OCI-LY7 (cell line): ENCODE measurements at regions of chr9 and their contacts with region 1.

Region 1: DNA sequence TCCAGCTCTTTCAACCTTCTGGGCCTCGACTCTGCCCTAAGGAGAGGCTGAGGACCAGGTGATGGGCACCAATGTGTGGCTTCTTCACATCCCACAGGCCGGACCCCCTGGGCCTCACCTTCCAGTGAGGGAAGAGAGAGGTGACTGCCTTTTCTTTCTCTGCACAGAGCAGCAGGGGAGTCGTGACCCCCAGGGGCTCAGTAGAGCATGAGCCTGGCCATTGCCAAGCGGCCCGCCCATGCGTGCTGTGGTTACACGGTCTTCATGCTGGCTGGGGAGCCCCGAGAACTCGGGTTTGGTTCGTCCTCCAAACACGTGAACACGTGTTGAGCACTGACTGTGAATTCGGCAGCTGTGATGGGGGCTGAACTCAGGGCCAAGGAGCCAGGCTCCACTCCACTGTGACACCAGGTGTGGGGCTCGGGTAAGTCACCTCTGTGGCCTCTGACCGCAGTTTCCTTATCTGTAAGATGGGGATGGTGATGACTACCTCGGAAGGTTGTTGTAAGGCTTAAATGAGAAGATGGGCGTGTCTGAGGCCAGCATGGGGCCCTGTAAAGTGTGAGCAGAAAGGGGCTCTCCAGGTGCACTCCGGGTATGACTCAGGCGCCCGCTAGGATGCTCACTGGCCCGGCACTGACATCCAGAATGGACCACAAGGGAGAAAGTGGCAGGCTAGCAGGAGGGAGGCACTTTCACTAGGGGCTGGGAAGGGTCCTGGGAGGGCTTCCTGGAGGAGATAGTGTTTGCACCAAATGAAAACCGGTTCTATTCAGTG is 13.4 kb upstream of the GRHPR start:
- DNase-seq: peak; percentile 100
- H3K4me3 ChIP-seq: peak overlapping the region; percentile 74
- H3K27ac ChIP-seq: peak overlapping the region; percentile 97
- H3K4me1 ChIP-seq: peaks cover 98% of the 10 kb centered on the region
- CTCF ChIP-seq: 0 out of 2 replicates have a peak, but pooled peaks have one; percentile 29

Region 2: DNA sequence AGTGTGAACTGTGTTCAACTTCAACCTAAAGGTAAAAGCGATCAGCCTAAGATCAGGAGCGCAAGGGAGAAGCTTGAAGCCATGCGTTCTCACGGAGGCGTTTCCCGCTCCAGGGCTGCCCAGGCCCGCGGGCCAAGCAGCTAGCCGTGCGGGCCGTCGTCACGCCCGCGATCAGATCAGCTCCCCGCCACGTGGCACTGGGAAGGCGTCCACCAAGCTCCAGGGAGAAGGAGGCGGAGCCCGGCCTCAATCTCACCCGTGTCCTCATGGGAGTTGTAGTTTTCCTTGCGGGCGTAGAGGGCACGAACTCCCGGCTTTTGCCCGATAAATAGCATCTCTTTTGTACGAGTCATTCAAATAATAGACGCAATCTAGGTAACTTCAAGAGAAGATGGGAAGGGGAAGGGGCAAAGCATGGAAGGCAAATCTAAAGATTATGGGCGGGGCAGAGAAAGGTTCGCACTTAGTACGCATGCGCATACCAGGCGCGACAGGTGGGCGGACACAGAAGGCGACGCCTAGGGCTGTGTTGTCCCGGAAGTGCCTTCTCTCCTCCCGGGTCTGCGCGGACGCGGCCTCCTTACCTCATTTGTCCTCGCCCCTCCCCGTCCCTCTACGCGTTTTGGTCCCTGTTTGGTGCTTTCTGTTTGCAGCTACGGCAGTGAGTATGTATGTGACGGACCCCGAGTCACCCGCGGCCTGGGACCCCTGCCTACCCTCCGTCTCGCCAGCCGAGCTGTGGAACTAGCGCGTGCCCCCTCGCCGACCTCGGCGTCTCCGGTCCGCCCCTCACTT is 329.6 kb before region 1 on chr9:
- CTCF ChIA-PET with region 1: no interaction called
- POLR2A ChIA-PET with region 1: interaction called, 3 read pairs
- intact Hi-C with region 1: loop called (anchors 5 kb)
- DNase-seq: peak; percentile 97
- H3K4me3 ChIP-seq: peak overlapping the region; percentile 90
- H3K27ac ChIP-seq: peak overlapping the region; percentile 70
- H3K4me1 ChIP-seq: peaks cover 63% of the 10 kb centered on the region
- CTCF ChIP-seq: no peak

Region 3: DNA sequence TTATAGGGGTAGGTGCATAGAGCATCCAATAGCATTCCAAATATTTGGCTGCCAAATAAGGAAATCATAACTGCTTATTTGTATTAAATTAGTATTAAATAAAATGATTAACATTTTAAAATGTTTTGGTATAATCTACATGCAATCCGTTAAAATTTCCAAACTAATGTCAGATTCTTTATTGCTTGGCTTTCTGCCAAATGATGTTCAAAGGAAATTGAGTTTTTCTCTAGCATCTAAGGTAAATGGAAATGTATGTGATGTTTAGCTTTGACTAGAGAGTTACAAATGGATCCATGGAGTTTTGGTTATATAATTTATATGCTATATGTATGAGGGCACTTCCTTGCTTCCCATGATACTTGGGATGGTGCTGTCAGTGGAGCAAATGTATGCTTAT is 167.0 kb before region 1 on chr9:
- CTCF ChIA-PET with region 1: no interaction called
- POLR2A ChIA-PET with region 1: no interaction called
- intact Hi-C with region 1: no loop called
- DNase-seq: no peak
- H3K4me3 ChIP-seq: no peak overlapping the region
- H3K27ac ChIP-seq: no peak overlapping the region
- H3K4me1 ChIP-seq: peaks cover 30% of the 10 kb centered on the region
- CTCF ChIP-seq: no peak

Region 4: GRCh38 chr9:37293664-37294524 is 115.2 kb before region 1 on chr9:
- CTCF ChIA-PET with region 1: interaction called, 4 read pairs
- POLR2A ChIA-PET with region 1: interaction called, 20 read pairs
- intact Hi-C with region 1: loop called (anchors 2 kb)
- DNase-seq: peak; percentile 97
- H3K4me3 ChIP-seq: peak overlapping the region; percentile 46
- H3K27ac ChIP-seq: peak overlapping the region; percentile 99
- H3K4me1 ChIP-seq: peaks cover 100% of the 10 kb centered on the region
- CTCF ChIP-seq: no peak

Region 5: DNA sequence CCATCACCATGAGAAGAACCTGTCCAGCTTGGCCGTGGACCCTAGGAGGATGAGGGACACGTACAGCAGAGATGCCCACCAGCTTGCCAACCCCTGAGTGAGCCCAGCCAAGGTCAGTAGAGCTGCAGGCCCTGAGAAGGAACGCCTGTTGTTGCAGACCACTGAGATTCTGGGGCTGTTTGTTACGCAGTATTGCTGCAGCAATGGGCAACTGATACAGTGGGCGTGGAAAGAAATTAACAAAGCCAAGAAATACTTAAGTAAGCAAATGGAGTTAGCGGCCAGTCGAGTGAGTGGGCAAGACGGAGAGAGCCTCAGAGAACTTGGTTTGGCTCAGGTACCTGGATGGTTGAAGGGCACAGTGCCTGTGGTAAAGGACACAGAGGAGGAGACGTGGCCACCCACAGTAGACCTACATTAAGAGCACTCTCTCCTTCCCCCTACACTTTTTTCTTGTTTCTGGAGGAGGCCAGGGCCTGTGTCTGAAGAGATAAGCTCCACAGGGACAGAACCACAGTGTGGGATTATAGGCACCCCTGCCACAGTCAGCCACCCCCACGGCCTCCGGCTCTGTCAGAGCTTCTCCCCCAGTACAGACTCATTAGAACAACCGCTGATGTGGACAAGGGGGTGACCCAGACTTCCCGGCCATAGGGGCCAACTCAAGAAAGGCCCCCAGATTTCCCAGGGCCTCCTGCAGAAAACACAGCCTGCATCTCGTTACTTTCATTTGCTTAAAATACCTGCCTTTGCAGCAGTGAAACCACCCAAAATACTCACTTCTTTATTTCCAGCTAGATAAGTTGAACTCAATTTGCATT is 26.8 kb before region 1 on chr9:
- CTCF ChIA-PET with region 1: interaction called, 4 read pairs
- POLR2A ChIA-PET with region 1: interaction called, 298 read pairs
- intact Hi-C with region 1: no loop called
- DNase-seq: peak; percentile 71
- H3K4me3 ChIP-seq: peak overlapping the region; percentile 30
- H3K27ac ChIP-seq: peak overlapping the region; percentile 90
- H3K4me1 ChIP-seq: peaks cover 93% of the 10 kb centered on the region
- CTCF ChIP-seq: no peak

Region 6: DNA sequence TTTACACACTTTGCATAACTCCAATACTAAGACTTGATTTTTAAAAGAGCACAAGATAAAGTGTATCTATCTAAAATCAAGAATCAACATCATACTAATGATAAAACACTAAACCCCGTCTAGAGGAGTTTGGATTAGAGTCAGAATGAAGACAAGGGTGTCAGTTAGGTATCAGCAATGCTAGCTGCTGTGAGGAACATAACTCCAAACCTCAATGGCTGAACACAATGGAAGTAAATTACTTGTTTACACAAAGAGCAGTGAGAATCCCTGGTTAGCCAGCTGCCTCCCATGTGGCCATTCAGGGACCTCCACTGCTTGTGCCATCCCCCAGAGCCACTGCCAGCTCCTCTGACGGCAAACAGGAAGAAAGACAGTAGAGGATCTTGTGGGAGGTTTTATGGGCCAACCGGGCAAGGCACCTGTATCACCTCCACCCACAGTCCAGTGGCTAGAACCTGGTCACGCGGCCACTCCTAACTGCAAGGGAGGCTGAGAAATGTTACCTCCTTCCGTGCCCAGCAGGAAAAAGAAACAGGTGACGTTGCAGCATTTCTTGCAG is 10.6 kb before region 1 on chr9:
- CTCF ChIA-PET with region 1: interaction called, 6 read pairs
- POLR2A ChIA-PET with region 1: interaction called, 41 read pairs
- intact Hi-C with region 1: no loop called
- DNase-seq: no peak
- H3K4me3 ChIP-seq: peak overlapping the region; percentile 37
- H3K27ac ChIP-seq: peak overlapping the region; percentile 97
- H3K4me1 ChIP-seq: peaks cover 91% of the 10 kb centered on the region
- CTCF ChIP-seq: no peak